Transverse colon (tissue), 4 donors: ENCODE measurements at regions of chr10 and their contacts with region 1.

Region 1: DNA sequence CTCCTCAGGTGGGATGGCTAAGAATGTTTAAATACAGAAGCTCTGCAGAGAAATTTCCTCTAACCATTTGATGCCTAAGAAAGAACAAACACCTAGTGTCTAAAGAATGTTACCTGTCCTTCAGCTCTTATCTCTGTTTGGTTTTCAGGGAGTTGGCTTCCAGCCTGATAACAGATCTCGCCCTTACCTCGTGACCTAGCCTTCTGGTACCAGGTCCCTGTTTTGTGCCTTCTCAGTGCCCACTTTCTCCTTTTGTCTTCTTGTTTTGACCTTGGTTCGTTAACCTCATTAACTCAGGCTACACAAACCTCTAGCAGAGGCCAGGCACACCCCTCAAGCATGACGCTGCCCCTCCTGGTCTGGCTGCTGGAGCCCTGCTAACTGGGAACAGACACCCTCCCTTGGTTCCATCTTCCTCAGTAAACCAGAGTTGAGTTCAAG is 16.1 kb upstream of the RAB11FIP2 start:
- DNase-seq: peak; percentile 40
- H3K4me3 ChIP-seq: no peak overlapping the region
- H3K27ac ChIP-seq: no peak overlapping the region
- H3K4me1 ChIP-seq: peaks cover 0 to 7% (median 3%) of the 10 kb centered on the region in 4 donors
- H3K27me3 ChIP-seq: no peaks in the 10 kb centered on the region
- CTCF ChIP-seq: no peak
- EP300 ChIP-seq: no peak
- POLR2A ChIP-seq: no peak

Region 2: GRCh38 chr10:118096022-118096421 is 33.2 kb after region 1 on chr10:
- in situ Hi-C with region 1: no loop called
- intact Hi-C with region 1: loop called (anchors 1 kb)
- DNase-seq: no peak
- H3K4me3 ChIP-seq: no peak overlapping the region
- H3K27ac ChIP-seq: no peak overlapping the region
- H3K4me1 ChIP-seq: no peaks in the 10 kb centered on the region
- H3K27me3 ChIP-seq: no peaks in the 10 kb centered on the region
- CTCF ChIP-seq: no peak
- EP300 ChIP-seq: no peak
- POLR2A ChIP-seq: no peak